ENCODE measurements at regions of chr2 and their contacts with region 1.

Region 1: DNA sequence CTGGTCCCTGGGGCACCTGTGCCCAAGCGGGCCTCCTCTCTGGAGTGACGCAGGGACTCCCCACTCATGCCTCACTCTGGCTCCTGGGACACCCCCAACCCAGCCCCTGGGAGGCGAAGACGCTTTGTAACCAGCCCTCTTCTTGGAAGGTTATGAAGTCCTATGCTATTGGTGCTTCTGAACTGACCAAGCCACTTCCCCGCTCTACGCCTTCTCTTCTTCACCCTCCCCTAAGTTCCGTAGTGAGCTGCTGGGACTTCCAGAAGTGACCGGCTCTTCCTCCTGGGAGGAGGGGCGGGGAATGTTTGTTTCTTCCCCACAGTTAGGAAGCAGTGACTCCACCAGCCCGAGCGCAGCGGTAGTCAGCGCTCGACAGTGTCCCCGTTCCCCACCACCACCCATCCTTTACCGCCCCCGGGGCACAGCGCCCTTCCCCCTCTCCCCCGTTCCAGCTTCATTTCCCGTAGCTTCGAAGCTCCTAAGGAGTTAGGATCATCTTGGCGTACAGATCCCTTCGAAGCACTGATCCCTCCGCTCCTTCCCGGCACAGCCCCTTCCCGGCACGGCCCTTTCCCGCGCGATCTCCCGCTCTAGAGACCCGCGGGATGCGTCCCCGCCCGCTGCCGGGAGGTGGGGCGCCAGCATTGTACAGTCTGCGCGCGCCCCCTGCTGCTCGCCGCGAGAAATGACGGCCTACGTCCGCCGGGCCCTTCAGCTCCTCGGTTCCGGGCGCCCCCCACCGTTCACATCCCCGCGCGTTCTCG is 25.3 kb upstream of the NOTO start:
- DNase-seq: peak; percentile 94
- CTCF ChIP-seq: peak; percentile 98

Region 2: DNA sequence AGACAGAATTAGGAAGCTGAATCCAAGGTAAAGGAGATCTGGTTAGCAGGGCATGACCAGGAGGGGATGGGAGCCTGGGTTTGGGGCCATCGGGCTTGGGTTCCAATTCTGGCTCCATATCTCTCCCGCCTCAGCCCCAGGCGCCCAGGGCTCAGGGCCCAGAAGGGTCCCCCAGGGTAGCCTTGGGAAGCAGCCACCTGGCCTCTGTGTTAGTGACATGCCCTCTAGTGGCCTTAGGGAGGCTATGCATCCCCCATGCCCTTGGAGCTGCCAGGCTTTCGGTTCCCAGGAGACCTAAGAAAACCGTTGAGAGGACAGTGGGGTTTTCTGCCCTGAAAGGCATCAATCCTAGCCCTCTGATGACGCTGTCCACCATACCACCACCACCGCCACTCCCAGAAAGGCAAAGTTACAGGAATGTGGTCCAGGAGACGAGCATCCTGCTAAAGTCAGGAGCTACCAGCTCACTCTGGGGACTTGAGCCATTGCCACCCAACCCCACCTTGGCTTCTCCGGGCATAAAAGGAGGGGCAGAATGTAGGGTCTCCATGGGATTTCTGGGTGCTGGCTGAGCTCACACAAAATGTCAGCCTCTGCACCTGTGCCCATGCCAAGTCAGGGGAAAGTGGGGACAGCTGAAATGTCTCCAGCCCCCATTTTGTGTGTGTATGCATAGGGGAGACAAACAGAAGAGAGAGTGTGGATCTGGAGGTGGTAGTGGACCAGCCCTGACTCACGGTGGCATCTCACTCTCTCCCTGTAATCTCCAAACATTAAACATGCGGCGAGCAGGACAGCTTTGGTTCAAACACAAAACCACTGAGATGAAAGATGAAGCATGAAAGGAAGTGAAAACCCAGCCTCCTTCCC is 203.3 kb before region 1 on chr2:
- CTCF ChIA-PET with region 1: interaction called, 16 read pairs
- POLR2A ChIA-PET with region 1: no interaction called
- DNase-seq: peak; percentile 84
- CTCF ChIP-seq: peak; percentile 85

Region 3: DNA sequence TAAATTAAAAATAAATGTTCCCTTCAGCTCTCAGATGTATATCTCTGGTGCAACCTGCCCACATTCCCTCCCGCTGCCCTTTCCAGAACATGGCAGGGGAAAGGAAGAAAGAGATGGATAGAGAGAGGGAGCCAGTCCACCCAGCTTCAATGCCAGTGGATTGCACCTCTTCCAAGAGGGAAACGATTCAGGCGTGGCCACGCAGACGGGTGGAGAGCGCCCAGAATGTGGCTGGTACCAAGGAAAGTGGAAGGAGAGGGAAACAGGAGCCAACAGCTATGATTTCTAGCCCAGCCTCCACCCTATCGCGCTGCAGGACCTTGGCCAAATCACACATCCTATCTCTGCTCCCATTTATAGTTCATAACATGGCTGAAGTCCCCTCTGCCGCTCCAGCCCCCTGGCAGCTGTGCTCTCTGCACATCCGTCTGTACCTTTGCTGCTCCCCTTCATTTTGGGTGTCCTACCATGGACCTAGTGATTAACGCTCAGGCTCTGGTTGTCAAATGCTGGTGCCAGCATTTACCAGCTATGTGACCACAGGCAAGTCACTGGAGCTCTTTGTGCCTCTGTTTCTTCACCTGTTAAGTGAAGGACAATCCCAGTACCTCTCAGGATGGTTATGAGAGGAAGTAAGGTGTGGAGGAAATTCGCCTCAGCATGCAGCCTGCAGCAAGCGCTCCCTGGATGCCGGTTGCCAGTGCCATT is 172.0 kb before region 1 on chr2:
- CTCF ChIA-PET with region 1: interaction called, 10 read pairs
- POLR2A ChIA-PET with region 1: no interaction called
- DNase-seq: no peak
- CTCF ChIP-seq: no peak

Region 4: DNA sequence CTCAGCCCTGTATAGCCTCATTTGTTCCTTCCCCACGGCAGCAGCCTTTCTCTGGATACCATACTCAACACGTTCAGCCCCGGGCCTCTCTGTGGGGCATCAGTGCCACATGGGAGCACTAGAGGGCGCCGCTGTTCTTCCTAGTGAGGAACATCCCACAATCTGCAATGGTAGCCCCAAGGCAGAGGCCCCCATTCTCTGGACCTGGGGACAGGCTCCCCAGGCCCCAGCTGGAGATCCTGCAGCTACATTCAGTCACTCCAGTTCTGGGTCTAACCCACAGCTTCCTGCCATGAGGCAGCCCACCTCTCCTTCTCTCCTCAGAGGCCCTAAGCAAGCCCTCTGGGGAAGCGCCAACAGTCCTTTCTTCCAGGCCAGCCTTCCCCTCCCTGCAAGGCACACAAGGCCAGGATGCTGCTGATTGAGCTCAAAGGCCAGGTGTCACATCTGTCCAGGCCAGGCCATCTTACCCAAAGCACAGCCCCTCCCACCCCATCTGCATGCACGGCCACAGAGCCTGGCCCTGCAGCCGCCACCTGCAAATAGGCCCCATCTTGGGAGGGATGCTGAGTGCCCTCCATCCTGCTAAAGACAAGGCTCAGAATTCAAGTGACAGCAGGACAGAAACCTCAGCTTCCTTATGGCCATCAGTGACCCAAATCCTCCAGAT is 91.2 kb before region 1 on chr2:
- CTCF ChIA-PET with region 1: interaction called, 70 read pairs
- POLR2A ChIA-PET with region 1: no interaction called
- DNase-seq: peak; percentile 85
- CTCF ChIP-seq: peak; percentile 90

Region 5: DNA sequence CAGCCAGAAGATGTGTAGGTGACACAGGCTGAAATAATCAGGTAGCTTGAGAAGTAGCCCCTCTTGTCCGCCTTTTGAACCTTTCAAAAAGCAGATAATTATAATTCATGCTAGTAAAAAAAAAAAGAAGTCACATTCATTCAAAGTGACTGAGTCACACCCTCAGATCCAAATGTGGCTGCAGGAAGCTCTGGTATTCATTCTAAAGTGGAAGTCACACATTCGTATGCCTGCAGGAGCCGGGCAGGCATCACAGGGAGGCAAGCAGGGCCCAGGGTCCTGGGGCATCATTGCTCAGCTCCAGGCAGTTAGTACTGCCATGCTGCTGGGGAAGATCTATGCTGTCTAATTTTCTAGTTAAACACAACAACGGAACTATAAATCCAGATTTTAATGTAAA is 42.6 kb before region 1 on chr2:
- CTCF ChIA-PET with region 1: no interaction called
- POLR2A ChIA-PET with region 1: no interaction called
- DNase-seq: no peak
- CTCF ChIP-seq: no peak

Region 6: DNA sequence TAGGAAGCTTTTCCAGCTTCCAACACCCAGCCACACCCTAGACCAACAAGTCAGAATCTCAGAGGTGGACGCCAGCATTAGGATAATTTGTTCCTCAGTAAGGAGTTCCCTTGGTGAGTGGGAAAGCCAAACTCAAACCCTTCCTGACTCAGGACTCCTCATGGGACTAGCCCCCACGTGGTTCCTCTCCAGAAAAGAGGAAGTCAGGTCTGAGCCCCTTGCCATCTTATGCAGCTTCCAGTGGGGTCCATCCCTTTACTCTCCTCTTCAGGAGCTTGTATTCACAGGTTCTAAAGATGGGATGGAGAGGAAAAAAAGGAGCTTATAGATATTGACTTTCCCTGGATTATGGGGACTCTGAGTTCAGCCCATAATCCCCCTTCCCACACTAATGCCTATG is 10.5 kb after region 1 on chr2:
- CTCF ChIA-PET with region 1: interaction called, 48 read pairs
- POLR2A ChIA-PET with region 1: no interaction called
- DNase-seq: no peak
- CTCF ChIP-seq: no peak

Region 7: DNA sequence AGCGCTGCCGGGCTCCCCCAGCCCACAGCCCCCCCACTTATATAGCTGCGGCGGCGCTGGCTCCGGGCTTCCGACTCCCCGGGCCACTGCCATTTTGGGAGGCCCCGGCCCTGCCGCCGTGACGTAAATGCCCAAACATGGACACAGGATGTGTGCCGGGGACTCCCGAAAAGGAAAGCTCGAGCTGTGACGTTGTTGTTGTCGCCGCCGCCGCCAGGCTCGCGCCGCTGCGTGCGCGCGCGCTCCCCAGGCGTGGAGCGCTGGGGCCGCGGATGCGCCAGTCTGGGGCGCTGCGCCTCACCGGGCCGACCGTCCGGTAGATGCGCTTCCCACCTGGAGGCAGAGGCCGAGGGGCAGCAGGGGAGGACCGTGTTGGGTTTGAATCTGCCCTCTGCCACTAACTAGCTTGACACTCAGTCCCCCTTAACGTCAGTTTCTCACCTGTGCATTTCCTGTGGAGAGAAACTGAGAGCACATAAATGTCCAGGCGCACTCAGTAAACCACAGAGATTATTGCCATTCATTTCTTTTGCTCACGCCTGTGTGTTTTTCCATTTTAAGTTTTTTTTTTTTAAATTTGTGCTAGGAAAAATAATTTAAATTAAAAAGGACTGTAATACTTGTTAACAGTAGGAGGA is 116.6 kb after region 1 on chr2 and contains the start of gene EGR4:
- CTCF ChIA-PET with region 1: interaction called, 17 read pairs
- POLR2A ChIA-PET with region 1: no interaction called
- DNase-seq: peak; percentile 94
- CTCF ChIP-seq: no peak

Measured in GM10248 (cell line).